Spleen (tissue), 13 donors: ENCODE measurements at regions of chr2 and their contacts with region 1.

Region 1: GRCh38 chr2:74715078-74715791 is 61.2 kb downstream of the SEMA4F start:
- DNase-seq: peak; percentile 93
- H3K4me3 ChIP-seq: peak overlapping the region; percentile 45 to 71 (median 50)
- H3K27ac ChIP-seq: peak overlapping the region in 5 of 8 donors; percentile 34 to 80 (median 60)
- H3K4me1 ChIP-seq: peaks cover 0 to 15% (median 8%) of the 10 kb centered on the region in 6 donors
- H3K27me3 ChIP-seq: peaks cover 0 to 33% (median 0%) of the 10 kb centered on the region in 7 donors
- CTCF ChIP-seq: peak; percentile 60 to 93 (median 88)
- POLR2A ChIP-seq: no peak

Region 2: GRCh38 chr2:74696829-74697228 is 18.4 kb before region 1 on chr2:
- intact Hi-C with region 1: no loop called
- DNase-seq: no peak
- H3K4me3 ChIP-seq: no peak overlapping the region
- H3K27ac ChIP-seq: no peak overlapping the region
- H3K4me1 ChIP-seq: peaks cover 0 to 18% (median 0%) of the 10 kb centered on the region in 6 donors
- H3K27me3 ChIP-seq: no peaks in the 10 kb centered on the region
- CTCF ChIP-seq: no peak
- POLR2A ChIP-seq: no peak

Region 3: DNA sequence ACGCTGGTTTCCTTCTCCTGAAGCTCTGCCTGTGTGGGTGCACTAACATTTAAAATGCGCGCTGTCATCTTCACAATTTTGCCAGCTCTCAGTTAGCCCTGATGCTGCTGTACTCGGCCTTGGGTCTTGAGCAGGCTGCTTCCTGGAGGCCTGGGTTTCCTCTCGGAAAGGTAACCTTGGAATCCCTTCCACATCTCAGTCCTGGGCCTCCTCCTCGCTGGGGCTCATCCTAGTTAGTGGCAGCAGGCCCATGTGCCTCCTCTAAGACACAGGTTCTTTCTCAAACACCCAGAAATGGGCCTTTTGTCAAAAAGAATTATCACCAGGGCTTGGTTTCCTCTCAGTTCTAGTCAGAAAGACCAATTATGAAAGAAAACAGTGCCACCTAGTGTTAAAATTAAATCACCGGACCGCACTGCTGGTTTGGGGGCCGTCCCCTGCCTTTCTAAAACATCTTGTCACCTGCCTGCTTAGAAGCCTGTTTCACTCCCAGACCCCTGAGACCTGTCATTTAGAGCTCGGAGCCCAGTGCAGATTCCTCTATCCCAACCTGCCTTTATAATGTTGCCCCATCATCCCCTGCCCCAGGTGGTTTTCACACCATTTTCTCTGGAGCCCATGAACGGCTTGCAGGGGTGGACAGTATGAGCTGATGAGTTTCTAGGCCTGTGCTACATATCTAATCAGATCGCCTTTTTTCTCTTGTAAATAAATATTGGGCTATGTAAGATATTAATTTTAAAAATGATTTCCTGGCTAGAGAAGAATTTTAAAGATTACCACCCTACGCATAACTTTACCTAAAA is 161.0 kb after region 1 on chr2:
- intact Hi-C with region 1: loop called (anchors 2 kb)
- DNase-seq: no peak
- H3K4me3 ChIP-seq: peak overlapping the region in 1 of 8 donors; percentile 26
- H3K27ac ChIP-seq: peak overlapping the region in 7 of 8 donors; percentile 28 to 90 (median 84)
- H3K4me1 ChIP-seq: peaks cover 4 to 32% (median 17%) of the 10 kb centered on the region in 6 donors
- H3K27me3 ChIP-seq: no peaks in the 10 kb centered on the region
- CTCF ChIP-seq: peak; percentile 55 to 85 (median 79)
- POLR2A ChIP-seq: no peak